Activated CD4-positive, alpha-beta T cell treated with anti-CD3 and anti-CD28 coated beads, Interleukin-2, amount 10 ng/mL, durations not matched to agents 24 days and 14 days (primary cell): ENCODE measurements at regions of chr12 and their contacts with region 1.

Region 1: GRCh38 chr12:76049575-76050251 is 18.1 kb upstream of the PHLDA1 start:
- DNase-seq: no peak
- H3K4me3 Mint-ChIP-seq: no peak overlapping the region
- H3K27ac Mint-ChIP-seq: no peak overlapping the region
- H3K4me1 Mint-ChIP-seq: peaks cover 2% of the 10 kb centered on the region
- H3K27me3 Mint-ChIP-seq: no peaks in the 10 kb centered on the region

Region 2: GRCh38 chr12:76064904-76065303 is 15.2 kb after region 1 on chr12:
- intact Hi-C with region 1: loop called (anchors 2 kb)
- DNase-seq: no peak
- H3K4me3 Mint-ChIP-seq: no peak overlapping the region
- H3K27ac Mint-ChIP-seq: no peak overlapping the region
- H3K4me1 Mint-ChIP-seq: peaks cover 29% of the 10 kb centered on the region
- H3K27me3 Mint-ChIP-seq: no peaks in the 10 kb centered on the region